ENCODE measurements at regions of chr7 and their contacts with region 1.

Region 1: GRCh38 chr7:99040104-99040958 is 103.6 kb downstream of the SMURF1 start:
- DNase-seq: peak; percentile 90 to 95
- ATAC-seq: peak; percentile 80 to 85
- H3K4me3 ChIP-seq: no peak overlapping the region
- H3K27ac ChIP-seq: peak overlapping the region; percentile 69 to 72
- H3K4me1 ChIP-seq: peaks cover 16% of the 10 kb centered on the region
- CTCF ChIP-seq: peak; percentile 83
- EP300 ChIP-seq: no peak
- POLR2A ChIP-seq: no peak
- RAD21 ChIP-seq: peak; percentile 95 to 96

Region 2: GRCh38 chr7:98420966-98421612 is 619.2 kb before region 1 on chr7:
- CTCF ChIA-PET with region 1: no interaction called
- POLR2A ChIA-PET with region 1: no interaction called
- DNase-seq: peak; percentile 89 to 92
- ATAC-seq: peak; percentile 53 to 64; a peak in 5 of 6 replicates
- H3K4me3 ChIP-seq: no peak overlapping the region
- H3K27ac ChIP-seq: peak overlapping the region; percentile 55 to 72
- H3K4me1 ChIP-seq: peaks cover 43% of the 10 kb centered on the region
- CTCF ChIP-seq: peak; percentile 94
- EP300 ChIP-seq: no peak
- POLR2A ChIP-seq: no peak
- RAD21 ChIP-seq: peak; percentile 83 to 84

Region 3: DNA sequence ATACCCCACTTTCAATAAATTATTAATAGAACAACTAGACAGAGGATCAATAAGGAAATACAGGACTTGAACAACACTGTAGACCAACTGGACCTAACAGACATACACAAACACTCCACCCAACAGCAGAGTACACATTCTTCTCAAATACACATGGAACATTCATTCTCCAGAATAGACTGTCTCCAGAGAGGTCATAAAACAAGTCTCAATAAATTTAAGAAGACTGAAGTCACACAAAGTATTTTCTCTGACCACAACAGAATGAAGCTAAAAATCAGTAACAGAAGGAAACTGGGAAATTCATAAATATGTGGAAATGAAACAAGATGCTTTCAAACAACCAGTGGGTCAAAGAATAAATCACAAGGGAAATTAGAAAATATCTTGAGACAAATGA is 16.3 kb before region 1 on chr7:
- CTCF ChIA-PET with region 1: interaction called, 19 read pairs
- POLR2A ChIA-PET with region 1: no interaction called
- DNase-seq: no peak
- ATAC-seq: no peak
- H3K4me3 ChIP-seq: no peak overlapping the region
- H3K27ac ChIP-seq: no peak overlapping the region
- H3K4me1 ChIP-seq: no peaks in the 10 kb centered on the region
- CTCF ChIP-seq: no peak
- EP300 ChIP-seq: no peak
- POLR2A ChIP-seq: no peak
- RAD21 ChIP-seq: no peak

Region 4: GRCh38 chr7:99050971-99051370 is 10.6 kb after region 1 on chr7:
- CTCF ChIA-PET with region 1: interaction called, 21 read pairs
- POLR2A ChIA-PET with region 1: no interaction called
- DNase-seq: peak in 1 of 2 experiments; percentile 16
- ATAC-seq: peak in 1 of 2 experiments; percentile 15; a peak in 2 of 6 replicates
- H3K4me3 ChIP-seq: no peak overlapping the region
- H3K27ac ChIP-seq: peak overlapping the region; percentile 49 to 63; a peak in 4 of 6 replicates
- H3K4me1 ChIP-seq: peaks cover 19% of the 10 kb centered on the region
- CTCF ChIP-seq: no peak
- EP300 ChIP-seq: no peak
- POLR2A ChIP-seq: no peak
- RAD21 ChIP-seq: no peak

Region 5: DNA sequence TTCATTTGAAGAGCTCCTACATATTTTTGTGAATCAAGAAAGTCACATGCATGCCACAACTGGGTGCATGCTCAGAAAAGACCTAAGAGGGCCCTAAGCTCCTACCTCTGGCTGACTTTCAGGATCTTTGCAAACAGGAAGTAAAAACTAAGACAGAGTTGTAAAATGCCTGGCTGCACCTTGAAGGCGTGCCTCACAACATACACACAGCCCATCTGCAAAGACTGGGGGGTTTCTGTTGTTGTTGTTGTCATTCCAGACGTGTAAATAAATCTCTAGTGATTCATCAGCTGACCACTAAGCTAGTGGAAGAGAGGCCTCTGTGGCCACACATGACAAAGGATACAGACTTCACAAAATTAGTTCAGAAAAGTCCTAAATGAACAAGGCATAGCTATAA is 71.8 kb after region 1 on chr7:
- CTCF ChIA-PET with region 1: interaction called, 11 read pairs
- POLR2A ChIA-PET with region 1: no interaction called
- DNase-seq: peak in 1 of 2 experiments; percentile 51
- ATAC-seq: peak; percentile 21 to 61; a peak in 3 of 6 replicates
- H3K4me3 ChIP-seq: no peak overlapping the region
- H3K27ac ChIP-seq: peak overlapping the region; percentile 39 to 47; a peak in 5 of 6 replicates
- H3K4me1 ChIP-seq: peaks cover 58% of the 10 kb centered on the region
- CTCF ChIP-seq: no peak
- EP300 ChIP-seq: no peak
- POLR2A ChIP-seq: no peak
- RAD21 ChIP-seq: no peak

Region 6: DNA sequence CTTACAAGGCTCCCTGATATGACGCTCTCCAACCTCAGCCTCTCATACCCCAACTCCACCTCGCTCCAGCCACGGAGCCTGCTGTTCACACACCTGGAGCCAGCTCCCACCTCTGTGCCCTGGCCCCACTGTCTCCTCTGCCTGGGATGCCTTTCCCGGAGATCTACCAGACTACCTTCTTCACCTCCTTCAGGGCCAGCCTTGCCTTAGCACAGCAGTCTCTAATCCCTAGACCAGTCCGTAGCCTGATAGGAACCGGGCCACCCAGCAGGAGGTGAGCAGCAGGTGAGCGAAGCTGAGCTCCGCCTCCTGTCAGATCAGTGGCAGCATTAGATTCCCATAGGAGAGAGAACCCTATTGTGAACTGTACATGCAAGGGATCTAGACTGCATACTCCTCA is 126.7 kb after region 1 on chr7:
- CTCF ChIA-PET with region 1: interaction called, 10 read pairs
- POLR2A ChIA-PET with region 1: no interaction called
- DNase-seq: no peak
- ATAC-seq: no peak
- H3K4me3 ChIP-seq: no peak overlapping the region
- H3K27ac ChIP-seq: no peak overlapping the region
- H3K4me1 ChIP-seq: peaks cover 14% of the 10 kb centered on the region
- CTCF ChIP-seq: no peak
- EP300 ChIP-seq: no peak
- POLR2A ChIP-seq: no peak
- RAD21 ChIP-seq: no peak

Region 7: DNA sequence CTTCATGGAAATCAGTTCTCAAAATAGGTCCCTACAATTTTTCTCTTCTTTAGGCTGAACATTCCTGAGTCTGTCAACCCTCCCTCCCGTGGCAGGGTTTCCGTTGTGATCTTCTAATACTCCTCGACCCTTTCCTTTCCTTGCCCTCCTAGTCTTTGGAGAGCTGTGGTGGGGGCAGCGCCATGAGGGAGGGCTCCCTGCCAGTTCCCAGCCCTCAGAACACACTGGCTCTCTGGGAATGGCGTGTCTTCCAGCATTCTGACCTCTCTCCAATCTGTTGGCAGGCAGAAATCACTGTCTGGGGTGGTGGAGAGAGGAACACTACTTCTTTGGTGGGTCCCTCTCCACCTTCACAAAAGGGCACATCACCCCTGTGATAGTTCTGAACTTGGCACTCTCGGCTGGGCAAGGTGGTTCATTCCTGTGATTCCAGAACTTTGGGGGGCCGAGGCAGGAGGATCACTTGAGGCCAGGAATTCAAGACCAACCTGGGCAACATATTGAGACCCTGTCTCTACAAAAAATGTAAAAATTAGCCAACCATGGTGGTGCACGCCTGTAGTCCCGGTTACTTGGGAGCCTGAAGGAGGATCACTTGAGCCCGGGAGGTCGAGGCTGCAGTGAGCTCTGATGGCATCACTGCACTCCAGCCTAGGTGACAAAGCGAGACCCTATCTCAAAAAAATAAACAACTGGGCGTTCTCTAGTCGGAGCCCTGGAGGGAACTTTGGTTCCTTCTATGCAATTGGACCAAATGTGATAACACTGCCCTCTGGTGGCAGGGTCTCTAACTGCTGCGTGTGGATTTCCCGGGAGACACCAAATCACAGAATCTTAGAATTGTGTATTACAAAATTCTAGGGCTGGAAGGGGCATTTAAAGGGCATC is 272.2 kb after region 1 on chr7:
- CTCF ChIA-PET with region 1: interaction called, 197 read pairs
- POLR2A ChIA-PET with region 1: no interaction called
- DNase-seq: peak; percentile 61 to 75
- ATAC-seq: peak; percentile 81 to 86
- H3K4me3 ChIP-seq: no peak overlapping the region
- H3K27ac ChIP-seq: peak overlapping the region; percentile 32 to 60; a peak in 3 of 6 replicates
- H3K4me1 ChIP-seq: no peaks in the 10 kb centered on the region
- CTCF ChIP-seq: peak; percentile 97
- EP300 ChIP-seq: no peak
- POLR2A ChIP-seq: no peak
- RAD21 ChIP-seq: peak; percentile 97

Region 8: DNA sequence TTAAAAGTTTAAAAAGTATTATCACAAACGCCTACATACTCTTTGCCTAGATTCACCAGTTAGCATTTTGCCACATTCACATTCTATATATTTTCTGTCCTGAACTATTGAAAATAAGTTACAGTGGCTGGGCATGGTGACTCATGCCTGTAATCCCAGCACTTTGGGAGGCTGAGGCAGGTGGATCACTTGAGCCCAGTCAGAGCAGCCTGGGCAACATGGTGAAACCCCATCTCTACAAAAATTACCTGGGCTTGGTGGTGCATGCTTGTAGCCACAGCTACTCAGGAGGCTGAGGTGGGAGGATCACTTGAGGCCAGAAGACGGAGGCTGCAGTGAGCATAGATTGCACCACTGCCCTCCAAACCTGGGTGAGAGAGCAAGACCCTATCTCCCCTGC is 290.7 kb after region 1 on chr7:
- CTCF ChIA-PET with region 1: interaction called, 11 read pairs
- POLR2A ChIA-PET with region 1: no interaction called
- DNase-seq: no peak
- ATAC-seq: no peak; a peak in 1 of 6 replicates
- H3K4me3 ChIP-seq: no peak overlapping the region
- H3K27ac ChIP-seq: peak overlapping the region; percentile 76 to 87
- H3K4me1 ChIP-seq: peaks cover 41% of the 10 kb centered on the region
- CTCF ChIP-seq: no peak
- EP300 ChIP-seq: no peak
- POLR2A ChIP-seq: no peak
- RAD21 ChIP-seq: no peak